Activated T-helper 2 cell treated with anti-CD3 and anti-CD28 coated beads, Interferon-gamma antibody, Interleukin-2, Interleukin-4, amounts not matched to agents 10 μg/mL and 5 μg/mL and 100 μg/mL, durations not matched to agents 14 hours and 24 hours and 36 hours (primary cell): ENCODE measurements at regions of chr5 and their contacts with region 1.

Region 1: GRCh38 chr5:102778478-102778877 is 23.4 kb downstream of the PAM start:
- DNase-seq: no peak
- H3K4me3 Mint-ChIP-seq: peak overlapping the region; percentile 23
- H3K27ac Mint-ChIP-seq: peak overlapping the region; percentile 86
- H3K4me1 Mint-ChIP-seq: peaks cover 56% of the 10 kb centered on the region
- H3K27me3 Mint-ChIP-seq: no peaks in the 10 kb centered on the region

Region 2: GRCh38 chr5:102681407-102681983 is 97.0 kb before region 1 on chr5:
- intact Hi-C with region 1: loop called (anchors 2 kb)
- DNase-seq: peak; percentile 23
- H3K4me3 Mint-ChIP-seq: no peak overlapping the region
- H3K27ac Mint-ChIP-seq: no peak overlapping the region
- H3K4me1 Mint-ChIP-seq: no peaks in the 10 kb centered on the region
- H3K27me3 Mint-ChIP-seq: peaks cover 8% of the 10 kb centered on the region

Region 3: DNA sequence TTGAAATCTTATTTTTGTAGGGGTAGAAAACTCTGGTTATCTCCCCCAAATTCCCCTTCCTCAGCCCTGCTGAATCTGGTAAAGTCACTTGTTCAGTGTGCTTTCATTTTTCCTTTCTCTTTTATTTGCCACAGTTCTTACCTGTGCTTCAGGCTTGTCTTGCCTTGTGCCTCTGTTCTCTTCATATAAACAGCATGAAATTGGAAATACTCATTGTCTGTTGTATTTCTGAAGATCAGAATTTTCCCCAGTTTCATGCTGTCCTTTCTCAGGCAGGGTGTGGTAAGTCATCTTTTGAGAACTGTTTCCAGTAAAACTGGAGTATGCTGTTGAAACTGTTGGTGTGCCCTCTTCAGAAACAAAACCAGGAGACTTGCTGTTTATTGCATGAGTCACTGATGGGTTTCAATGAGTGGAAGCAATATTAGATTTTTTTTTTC is 16.4 kb before region 1 on chr5:
- intact Hi-C with region 1: loop called (anchors 1 kb)
- DNase-seq: no peak
- H3K4me3 Mint-ChIP-seq: peak overlapping the region; percentile 58
- H3K27ac Mint-ChIP-seq: peak overlapping the region; percentile 82
- H3K4me1 Mint-ChIP-seq: peaks cover 69% of the 10 kb centered on the region
- H3K27me3 Mint-ChIP-seq: no peaks in the 10 kb centered on the region

Region 4: DNA sequence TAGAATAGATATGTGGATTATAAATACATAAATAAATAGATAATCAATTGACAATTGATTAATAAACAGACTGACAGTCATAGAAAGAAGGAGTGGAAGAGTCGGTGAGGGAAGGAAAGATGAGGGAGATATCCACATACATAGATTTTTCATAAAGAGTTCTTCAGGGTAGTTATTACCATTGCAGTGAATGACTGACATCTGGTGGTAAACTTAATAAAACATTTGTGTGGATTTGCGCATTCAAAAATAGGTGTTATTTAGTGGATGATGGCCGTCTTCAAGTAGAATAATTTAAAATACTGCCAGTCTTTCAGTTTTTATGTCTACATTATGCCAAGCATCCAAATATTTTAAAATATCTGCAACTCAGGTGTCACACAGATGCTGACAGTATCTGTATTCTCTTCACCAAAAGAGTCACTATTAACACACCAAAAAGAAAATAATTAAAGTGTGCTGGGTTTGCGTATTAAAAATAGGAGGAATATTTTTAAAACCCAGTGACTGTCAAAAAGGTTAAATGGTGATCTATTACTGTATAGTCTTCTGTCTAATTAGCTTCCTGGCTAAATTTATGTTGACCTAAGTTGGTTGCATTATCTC is 262.7 kb after region 1 on chr5:
- intact Hi-C with region 1: loop called (anchors 10 kb)
- DNase-seq: no peak
- H3K4me3 Mint-ChIP-seq: no peak overlapping the region
- H3K27ac Mint-ChIP-seq: no peak overlapping the region
- H3K4me1 Mint-ChIP-seq: no peaks in the 10 kb centered on the region
- H3K27me3 Mint-ChIP-seq: peaks cover 17% of the 10 kb centered on the region

Region 5: DNA sequence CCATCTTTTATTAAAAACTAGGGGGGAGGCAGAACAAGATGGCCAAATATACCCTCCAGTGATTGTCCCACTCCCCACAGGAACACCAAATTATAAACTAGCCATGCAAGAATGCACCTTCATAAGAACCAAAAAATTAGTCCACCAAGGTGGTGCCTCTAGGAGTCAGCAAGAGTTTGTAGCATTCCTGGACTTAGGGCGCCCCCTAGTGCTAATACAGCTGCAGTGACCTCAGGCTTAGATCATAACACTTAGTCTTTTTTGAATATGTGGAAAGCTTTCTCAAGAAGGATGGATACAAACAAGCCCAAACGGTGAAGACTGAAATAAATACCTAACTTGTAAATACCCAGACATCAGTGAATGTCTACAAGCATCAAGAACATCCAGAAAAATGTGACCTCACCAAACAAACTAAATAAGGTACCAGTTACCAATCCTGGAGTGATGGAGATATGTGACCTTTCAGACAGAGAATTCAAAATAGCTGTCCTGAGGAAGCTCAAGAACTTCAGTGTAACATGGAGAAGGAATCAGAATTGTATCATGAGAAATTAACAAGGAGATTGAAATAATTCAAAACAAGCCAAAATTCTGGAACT is 360.9 kb after region 1 on chr5:
- intact Hi-C with region 1: loop called (anchors 1 kb)
- DNase-seq: peak; percentile 64
- H3K4me3 Mint-ChIP-seq: no peak overlapping the region
- H3K27ac Mint-ChIP-seq: no peak overlapping the region
- H3K4me1 Mint-ChIP-seq: peaks cover 4% of the 10 kb centered on the region
- H3K27me3 Mint-ChIP-seq: no peaks in the 10 kb centered on the region